GM12878 (cell line): ENCODE measurements at regions of chr1 and their contacts with region 1.

Region 1: GRCh38 chr1:88877382-88877825 is 14.0 kb downstream of the GTF2B start:
- DNase-seq: no peak
- ATAC-seq: peak; percentile 56
- H3K4me3 ChIP-seq: no peak overlapping the region
- H3K27ac ChIP-seq: no peak overlapping the region
- H3K4me1 ChIP-seq: no peaks in the 10 kb centered on the region
- H3K27me3 ChIP-seq: no peaks in the 10 kb centered on the region
- CTCF ChIP-seq: peak; percentile 22 to 55 (median 24); a peak in 4 of 6 replicates
- EP300 ChIP-seq: no peak
- POLR2A ChIP-seq: no peak
- RAD21 ChIP-seq: peak; percentile 51; the same call in 1 of the 2 replicates

Region 2: DNA sequence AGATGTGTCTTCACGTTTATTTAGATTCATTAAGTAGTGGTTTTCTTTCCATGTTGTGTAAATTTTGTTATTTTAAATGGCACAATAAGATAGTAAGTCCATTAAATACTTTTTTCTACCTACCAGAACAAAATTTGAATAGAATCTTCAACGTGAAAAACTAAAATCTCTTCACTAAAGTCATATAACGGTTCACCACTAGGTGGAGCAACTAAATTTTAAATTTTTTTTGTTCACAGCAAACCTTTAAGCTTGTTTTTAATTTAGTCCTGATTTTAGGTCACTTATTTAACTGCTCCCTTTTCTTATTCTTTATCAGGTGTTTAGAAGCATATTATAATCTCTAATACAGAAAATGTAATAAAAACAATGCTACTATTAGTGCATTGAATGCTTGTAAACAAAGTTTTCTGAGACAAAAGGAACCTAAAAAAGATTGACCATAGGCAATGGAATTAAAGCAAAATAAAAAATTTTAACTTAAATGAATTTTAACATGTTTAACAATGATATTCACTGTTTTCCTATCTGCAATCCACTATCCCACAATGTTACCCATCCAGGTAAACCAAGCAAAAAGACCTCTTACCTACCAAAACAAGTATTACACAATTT is 221.6 kb before region 1 on chr1:
- CTCF ChIA-PET with region 1: interaction called, 293 read pairs
- POLR2A ChIA-PET with region 1: no interaction called
- RAD21 ChIA-PET with region 1: interaction called, 80 read pairs
- SMC1A ChIA-PET with region 1: interaction called, 132 read pairs
- in situ Hi-C with region 1: no loop called
- intact Hi-C with region 1: loop called (anchors 1 kb)
- DNase-seq: no peak
- ATAC-seq: no peak
- H3K4me3 ChIP-seq: no peak overlapping the region
- H3K27ac ChIP-seq: no peak overlapping the region
- H3K4me1 ChIP-seq: peaks cover 5% of the 10 kb centered on the region
- H3K27me3 ChIP-seq: no peaks in the 10 kb centered on the region
- CTCF ChIP-seq: peak; percentile 26 to 52 (median 51); a peak in 4 of 6 replicates
- EP300 ChIP-seq: no peak
- POLR2A ChIP-seq: no peak
- RAD21 ChIP-seq: peak; percentile 47

Region 3: DNA sequence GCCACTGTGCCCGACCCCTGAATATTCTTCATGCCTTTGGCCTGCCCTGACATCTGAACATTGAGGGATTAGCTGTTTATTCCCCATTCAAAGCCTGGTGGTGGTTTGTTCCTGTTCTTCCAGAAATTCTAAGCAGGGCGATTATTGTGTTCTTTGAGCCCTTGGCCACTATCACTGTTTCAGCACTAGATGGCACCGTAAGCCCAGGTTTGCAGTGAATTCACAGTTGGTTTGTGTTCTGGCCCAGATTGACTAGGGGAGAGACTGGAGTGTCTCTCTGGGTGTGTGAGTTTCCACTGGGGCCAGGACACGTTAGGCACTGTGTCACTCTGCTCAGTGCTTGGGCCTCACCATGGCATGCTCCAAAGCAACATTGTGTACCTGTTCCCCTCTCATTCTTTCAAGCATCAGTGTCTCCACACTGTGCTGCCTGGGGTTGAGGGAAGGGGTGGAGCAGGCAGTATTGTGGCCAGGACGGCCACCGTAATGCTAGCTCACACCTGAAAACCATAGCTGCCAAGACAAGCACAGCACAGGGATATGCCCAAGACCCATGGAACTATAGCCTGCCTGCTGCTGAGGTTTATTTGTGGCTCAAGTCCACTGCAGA is 140.7 kb before region 1 on chr1:
- CTCF ChIA-PET with region 1: interaction called, 13 read pairs
- POLR2A ChIA-PET with region 1: no interaction called
- RAD21 ChIA-PET with region 1: interaction called, 3 read pairs
- SMC1A ChIA-PET with region 1: interaction called, 12 read pairs
- in situ Hi-C with region 1: no loop called
- intact Hi-C with region 1: loop called (anchors 1 kb)
- DNase-seq: no peak
- ATAC-seq: peak; percentile 90
- H3K4me3 ChIP-seq: no peak overlapping the region
- H3K27ac ChIP-seq: no peak overlapping the region
- H3K4me1 ChIP-seq: no peaks in the 10 kb centered on the region
- H3K27me3 ChIP-seq: no peaks in the 10 kb centered on the region
- CTCF ChIP-seq: peak; percentile 40 to 63 (median 53); a peak in 5 of 6 replicates
- EP300 ChIP-seq: no peak
- POLR2A ChIP-seq: no peak
- RAD21 ChIP-seq: peak; percentile 55

Region 4: GRCh38 chr1:88847643-88848042 is 29.8 kb before region 1 on chr1:
- CTCF ChIA-PET with region 1: interaction called, 25 read pairs
- POLR2A ChIA-PET with region 1: no interaction called
- RAD21 ChIA-PET with region 1: no interaction called
- SMC1A ChIA-PET with region 1: no interaction called
- in situ Hi-C with region 1: no loop called
- intact Hi-C with region 1: no loop called
- DNase-seq: no peak
- ATAC-seq: no peak
- H3K4me3 ChIP-seq: no peak overlapping the region
- H3K27ac ChIP-seq: no peak overlapping the region
- H3K4me1 ChIP-seq: no peaks in the 10 kb centered on the region
- H3K27me3 ChIP-seq: no peaks in the 10 kb centered on the region
- CTCF ChIP-seq: no peak
- EP300 ChIP-seq: no peak
- POLR2A ChIP-seq: no peak
- RAD21 ChIP-seq: no peak

Region 5: DNA sequence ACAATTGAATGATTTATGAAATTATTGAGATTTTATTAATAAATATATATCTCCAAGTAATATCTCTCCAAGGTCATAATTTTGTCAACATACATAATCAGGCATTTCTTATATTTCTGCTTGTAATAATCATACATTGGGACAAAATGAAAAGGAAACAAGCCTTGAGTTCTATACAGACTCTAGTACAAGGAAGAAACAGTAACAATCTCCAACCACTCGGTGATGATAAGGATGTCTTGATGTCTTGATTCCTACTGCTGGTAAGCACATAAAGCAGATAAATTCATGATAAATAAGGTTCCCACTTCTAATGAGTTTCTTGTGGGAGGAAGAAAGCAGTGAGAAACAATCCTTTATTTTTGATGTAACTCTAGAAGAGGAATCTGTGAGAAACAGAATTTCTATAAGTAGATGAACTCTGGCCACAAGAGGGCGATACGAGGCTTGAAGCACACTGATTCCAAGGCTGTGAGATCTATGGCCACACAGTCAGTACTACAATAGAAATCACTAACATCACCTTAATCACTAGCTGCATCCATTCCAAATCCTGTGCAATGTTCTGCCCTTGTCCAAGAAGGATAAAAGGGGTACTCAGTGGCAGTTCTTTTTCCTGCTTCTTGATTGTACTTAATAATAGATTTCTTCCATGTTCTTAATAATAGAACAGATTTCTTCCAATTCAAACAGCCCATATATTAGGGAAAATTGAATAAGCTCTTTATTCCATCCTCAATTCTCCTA is 605.8 kb after region 1 on chr1:
- CTCF ChIA-PET with region 1: no interaction called
- POLR2A ChIA-PET with region 1: no interaction called
- RAD21 ChIA-PET with region 1: no interaction called
- SMC1A ChIA-PET with region 1: no interaction called
- in situ Hi-C with region 1: no loop called
- intact Hi-C with region 1: no loop called
- DNase-seq: peak; percentile 46
- ATAC-seq: peak; percentile 97
- H3K4me3 ChIP-seq: no peak overlapping the region
- H3K27ac ChIP-seq: no peak overlapping the region
- H3K4me1 ChIP-seq: no peaks in the 10 kb centered on the region
- H3K27me3 ChIP-seq: no peaks in the 10 kb centered on the region
- CTCF ChIP-seq: peak; percentile 72 to 82 (median 78)
- EP300 ChIP-seq: no peak
- POLR2A ChIP-seq: no peak
- RAD21 ChIP-seq: peak; percentile 77